ENCODE measurements at regions of chr9 and their contacts with region 1.

Region 1: GRCh38 chr9:6412487-6413364 is at the start of gene UHRF2:
- DNase-seq: peak; percentile 96 to 99 (median 98)
- H3K4me3 ChIP-seq: peak within 1 kb of the TSS; percentile 77 to 91
- H3K4me3 Mint-ChIP-seq: peak within 1 kb of the TSS; percentile 88 to 94 (median 92)
- H3K27ac ChIP-seq: peak within 1 kb of the TSS; percentile 72
- H3K27ac Mint-ChIP-seq: peak within 1 kb of the TSS; percentile 94 to 98 (median 96)
- H3K4me1 ChIP-seq: peaks cover 42% of the 10 kb centered on the region
- H3K4me1 Mint-ChIP-seq: peaks cover 28 to 45% (median 35%) of the 10 kb centered on the region in 4 donors
- H3K27me3 ChIP-seq: no peaks in the 10 kb centered on the region
- H3K27me3 Mint-ChIP-seq: peaks cover 0 to 1% of the 10 kb centered on the region in 2 donors
- total RNA-seq, gene UHRF2: 124 to 128 TPM

Region 2: GRCh38 chr9:5843794-5844504 is 568.8 kb before region 1 on chr9:
- CTCF ChIA-PET with region 1: no interaction called
- POLR2A ChIA-PET with region 1: interaction called, 9 read pairs
- intact Hi-C with region 1: loop called (anchors 5 kb)
- DNase-seq: no peak
- H3K4me3 ChIP-seq: peak overlapping the region in 1 of 2 donors; percentile 0
- H3K4me3 Mint-ChIP-seq: peak overlapping the region; percentile 68 to 91 (median 79)
- H3K27ac ChIP-seq: peak overlapping the region; percentile 38
- H3K27ac Mint-ChIP-seq: peak overlapping the region; percentile 85 to 96 (median 92)
- H3K4me1 ChIP-seq: peaks cover 58% of the 10 kb centered on the region
- H3K4me1 Mint-ChIP-seq: peaks cover 50 to 82% (median 65%) of the 10 kb centered on the region in 4 donors
- H3K27me3 ChIP-seq: no peaks in the 10 kb centered on the region
- H3K27me3 Mint-ChIP-seq: no peaks in the 10 kb centered on the region

Region 3: DNA sequence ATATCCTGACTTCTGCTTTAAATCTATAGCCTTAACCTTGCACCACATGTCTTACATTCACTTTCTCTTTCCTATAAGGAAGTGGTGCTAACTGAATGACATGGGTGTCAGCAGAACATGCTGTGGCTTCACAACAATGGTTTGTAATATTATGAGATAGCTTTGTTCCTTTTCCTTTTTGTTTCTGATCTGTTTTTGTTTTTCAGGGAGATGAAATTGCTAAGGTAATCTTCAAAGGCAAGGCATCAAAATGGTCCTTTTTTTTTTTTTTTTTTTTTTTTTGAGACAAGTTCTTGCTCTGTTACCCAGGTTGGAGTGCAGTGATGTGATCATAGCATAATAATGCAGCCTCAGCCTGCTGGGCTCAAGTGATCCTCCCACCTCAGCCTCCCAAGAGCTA is 343.7 kb before region 1 on chr9:
- CTCF ChIA-PET with region 1: no interaction called
- POLR2A ChIA-PET with region 1: interaction called, 11 read pairs
- intact Hi-C with region 1: no loop called
- DNase-seq: peak; percentile 55 to 76 (median 68)
- H3K4me3 ChIP-seq: peak overlapping the region in 1 of 2 donors; percentile 15
- H3K4me3 Mint-ChIP-seq: peak overlapping the region in 7 of 8 donors; percentile 33 to 79 (median 72)
- H3K27ac ChIP-seq: peak overlapping the region; percentile 1
- H3K27ac Mint-ChIP-seq: peak overlapping the region; percentile 50 to 98 (median 91)
- H3K4me1 ChIP-seq: peaks cover 17% of the 10 kb centered on the region
- H3K4me1 Mint-ChIP-seq: peaks cover 10 to 34% (median 16%) of the 10 kb centered on the region in 4 donors
- H3K27me3 ChIP-seq: no peaks in the 10 kb centered on the region
- H3K27me3 Mint-ChIP-seq: no peaks in the 10 kb centered on the region

Region 4: GRCh38 chr9:6449645-6450044 is 36.9 kb after region 1 on chr9:
- CTCF ChIA-PET with region 1: no interaction called
- POLR2A ChIA-PET with region 1: interaction called, 15 read pairs
- intact Hi-C with region 1: no loop called
- DNase-seq: no peak
- H3K4me3 ChIP-seq: no peak overlapping the region
- H3K4me3 Mint-ChIP-seq: peak overlapping the region in 7 of 8 donors; percentile 20 to 62 (median 31)
- H3K27ac ChIP-seq: no peak overlapping the region
- H3K27ac Mint-ChIP-seq: peak overlapping the region in 4 of 7 donors; percentile 4 to 34 (median 19)
- H3K4me1 ChIP-seq: peaks cover 37% of the 10 kb centered on the region
- H3K4me1 Mint-ChIP-seq: peaks cover 46 to 83% (median 70%) of the 10 kb centered on the region in 4 donors
- H3K27me3 ChIP-seq: no peaks in the 10 kb centered on the region
- H3K27me3 Mint-ChIP-seq: no peaks in the 10 kb centered on the region

Region 5: DNA sequence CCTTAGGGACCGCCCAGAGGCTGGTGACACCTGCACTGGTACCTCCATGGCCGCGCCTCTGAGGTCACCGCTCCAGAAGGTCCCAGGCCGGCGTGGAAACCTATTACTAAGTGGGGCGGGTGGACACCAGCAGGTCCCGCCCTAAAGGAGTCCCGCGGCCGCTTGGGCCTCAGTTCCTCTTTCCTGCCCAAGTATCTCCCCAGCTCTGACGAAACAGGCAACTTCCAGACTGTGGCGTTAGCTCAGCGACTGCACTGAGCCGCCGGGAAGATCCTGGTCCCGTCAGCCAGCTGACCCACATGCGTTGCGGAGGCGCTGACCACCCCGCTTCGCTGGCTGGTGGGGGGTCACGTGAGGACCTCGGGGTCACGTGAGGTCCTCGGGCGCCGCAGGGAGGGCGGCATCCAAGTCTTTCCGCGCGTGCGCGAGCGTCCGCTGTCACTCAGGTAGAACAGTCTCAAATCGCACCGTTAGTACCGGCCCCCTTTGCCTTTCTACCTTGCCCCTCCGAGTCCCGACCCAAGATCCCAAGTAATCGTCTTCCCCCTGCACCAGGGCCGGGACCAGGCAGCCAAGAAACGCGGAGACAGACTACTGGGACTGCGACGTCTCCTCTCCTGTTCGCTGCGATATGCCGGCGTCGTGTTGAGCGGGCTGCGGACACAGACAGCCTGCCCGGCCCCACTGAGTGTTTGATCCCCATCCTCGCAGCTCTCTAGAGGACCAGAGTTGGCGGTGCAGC is 291.3 kb after region 1 on chr9:
- CTCF ChIA-PET with region 1: interaction called, 4 read pairs
- POLR2A ChIA-PET with region 1: interaction called, 13 read pairs
- intact Hi-C with region 1: no loop called
- DNase-seq: peak; percentile 75 to 78 (median 78)
- H3K4me3 ChIP-seq: peak overlapping the region; percentile 86 to 91
- H3K4me3 Mint-ChIP-seq: peak overlapping the region; percentile 91 to 98 (median 95)
- H3K27ac ChIP-seq: peak overlapping the region; percentile 92
- H3K27ac Mint-ChIP-seq: peak overlapping the region; percentile 93 to 99 (median 96)
- H3K4me1 ChIP-seq: peaks cover 12% of the 10 kb centered on the region
- H3K4me1 Mint-ChIP-seq: peaks cover 2 to 15% (median 11%) of the 10 kb centered on the region in 4 donors
- H3K27me3 ChIP-seq: no peaks in the 10 kb centered on the region
- H3K27me3 Mint-ChIP-seq: peaks cover 0 to 1% of the 10 kb centered on the region in 2 donors

Region 6: DNA sequence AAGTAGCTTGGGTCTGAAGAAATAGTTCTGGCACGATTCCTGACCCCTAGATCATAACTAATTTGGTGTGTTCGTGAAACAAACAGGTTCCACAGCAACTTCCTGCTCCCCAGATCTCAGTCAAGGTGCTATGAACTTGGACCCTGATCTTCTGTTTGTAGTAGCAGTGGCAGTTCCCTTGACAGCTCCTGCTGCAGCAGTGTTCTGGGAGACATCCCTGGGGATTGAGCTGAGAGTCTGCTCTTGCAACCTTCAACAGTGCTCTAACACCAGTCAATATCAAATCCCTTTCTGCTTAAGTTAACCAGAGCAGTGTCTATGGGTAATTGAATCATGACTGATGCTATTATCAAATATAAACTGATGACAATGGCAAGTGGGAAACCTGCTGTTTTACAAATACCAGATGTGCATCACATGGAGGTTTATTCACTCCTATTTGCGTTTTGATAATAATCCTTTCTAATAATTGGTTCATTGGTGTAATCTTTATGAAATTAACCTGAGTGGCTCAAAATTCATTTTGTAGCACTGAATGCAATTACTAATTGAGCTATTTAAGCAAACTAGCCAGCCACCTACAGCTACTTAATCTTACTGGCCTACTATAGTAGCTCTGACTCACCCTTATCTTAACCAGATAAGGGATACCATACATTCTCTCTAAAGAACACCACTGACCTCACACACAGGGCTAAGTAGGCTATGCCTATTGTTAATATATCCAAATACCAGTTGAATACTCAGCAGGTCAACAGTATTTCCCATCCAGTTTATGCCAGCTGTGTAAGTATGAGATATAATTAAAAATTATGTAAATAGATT is 366.9 kb after region 1 on chr9:
- CTCF ChIA-PET with region 1: no interaction called
- POLR2A ChIA-PET with region 1: no interaction called
- intact Hi-C with region 1: no loop called
- DNase-seq: no peak
- H3K4me3 ChIP-seq: no peak overlapping the region
- H3K4me3 Mint-ChIP-seq: peak overlapping the region in 2 of 8 donors; percentile 23 to 53
- H3K27ac ChIP-seq: no peak overlapping the region
- H3K27ac Mint-ChIP-seq: no peak overlapping the region
- H3K4me1 ChIP-seq: peaks cover 60% of the 10 kb centered on the region
- H3K4me1 Mint-ChIP-seq: peaks cover 53 to 86% (median 62%) of the 10 kb centered on the region in 4 donors
- H3K27me3 ChIP-seq: no peaks in the 10 kb centered on the region
- H3K27me3 Mint-ChIP-seq: no peaks in the 10 kb centered on the region

Region 7: DNA sequence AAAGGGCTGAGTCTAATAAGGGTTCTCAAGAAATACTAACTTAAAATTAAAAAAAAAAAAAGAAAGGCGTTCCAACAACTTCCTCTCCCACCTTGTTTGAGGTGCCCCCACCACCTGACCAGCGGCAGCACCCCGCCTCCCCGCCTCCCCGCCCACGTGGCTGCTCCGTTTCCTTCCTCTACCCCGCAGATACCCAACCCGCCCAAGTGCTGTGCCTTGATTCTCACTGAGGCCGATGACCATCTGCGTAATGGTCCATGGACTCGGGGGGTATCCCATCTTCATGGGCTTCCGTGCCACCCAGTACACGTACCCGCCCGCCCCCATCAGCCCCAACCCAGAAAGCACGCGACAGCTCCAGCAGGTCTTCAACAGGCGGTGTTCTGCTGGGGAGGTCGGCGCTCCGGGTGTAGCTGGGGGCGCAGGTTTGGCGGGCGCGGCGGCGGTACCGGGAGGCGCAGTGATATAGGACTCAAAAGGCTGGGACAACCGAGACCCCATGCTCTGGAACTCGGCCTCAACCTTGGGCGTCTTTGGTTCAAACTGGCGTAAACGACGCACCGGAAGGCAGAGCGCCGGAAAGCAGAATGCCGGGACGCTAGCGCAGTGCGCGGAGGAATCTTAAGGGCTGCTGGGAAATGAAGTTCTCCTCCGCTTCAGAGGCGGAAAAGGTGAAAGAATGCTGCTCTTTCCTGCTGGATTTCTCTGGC is 1386.7 kb after region 1 on chr9 and contains the start of gene DMAC1:
- CTCF ChIA-PET with region 1: no interaction called
- POLR2A ChIA-PET with region 1: no interaction called
- intact Hi-C with region 1: loop called (anchors 2 kb)
- DNase-seq: peak; percentile 72 to 81 (median 77)
- H3K4me3 ChIP-seq: peak within 1 kb of the TSS; percentile 27 to 92
- H3K4me3 Mint-ChIP-seq: peak within 1 kb of the TSS; percentile 92 to 99 (median 95)
- H3K27ac ChIP-seq: peak within 1 kb of the TSS; percentile 88
- H3K27ac Mint-ChIP-seq: peak within 1 kb of the TSS; percentile 94 to 96 (median 96)
- H3K4me1 ChIP-seq: peaks cover 25% of the 10 kb centered on the region
- H3K4me1 Mint-ChIP-seq: peaks cover 17 to 55% (median 25%) of the 10 kb centered on the region in 4 donors
- H3K27me3 ChIP-seq: no peaks in the 10 kb centered on the region
- H3K27me3 Mint-ChIP-seq: no peaks in the 10 kb centered on the region
- total RNA-seq, gene DMAC1: 30.8 to 38.0 TPM